Calu3 (cell line): ENCODE measurements at regions of chr3 and their contacts with region 1.

Region 1: GRCh38 chr3:160099834-160100233 is 111.2 kb downstream of the IL12A start:
- DNase-seq: no peak
- H3K4me3 Mint-ChIP-seq: no peak overlapping the region
- H3K27ac Mint-ChIP-seq: no peak overlapping the region
- H3K4me1 Mint-ChIP-seq: peaks cover 22% of the 10 kb centered on the region
- H3K27me3 Mint-ChIP-seq: no peaks in the 10 kb centered on the region
- CTCF ChIP-seq: no peak

Region 2: GRCh38 chr3:159884661-159885402 is 215.0 kb before region 1 on chr3:
- CTCF ChIA-PET with region 1: no interaction called
- intact Hi-C with region 1: loop called (anchors 10 kb)
- DNase-seq: peak; percentile 17
- H3K4me3 Mint-ChIP-seq: no peak overlapping the region
- H3K27ac Mint-ChIP-seq: no peak overlapping the region
- H3K4me1 Mint-ChIP-seq: no peaks in the 10 kb centered on the region
- H3K27me3 Mint-ChIP-seq: no peaks in the 10 kb centered on the region
- CTCF ChIP-seq: peak; percentile 75

Region 3: DNA sequence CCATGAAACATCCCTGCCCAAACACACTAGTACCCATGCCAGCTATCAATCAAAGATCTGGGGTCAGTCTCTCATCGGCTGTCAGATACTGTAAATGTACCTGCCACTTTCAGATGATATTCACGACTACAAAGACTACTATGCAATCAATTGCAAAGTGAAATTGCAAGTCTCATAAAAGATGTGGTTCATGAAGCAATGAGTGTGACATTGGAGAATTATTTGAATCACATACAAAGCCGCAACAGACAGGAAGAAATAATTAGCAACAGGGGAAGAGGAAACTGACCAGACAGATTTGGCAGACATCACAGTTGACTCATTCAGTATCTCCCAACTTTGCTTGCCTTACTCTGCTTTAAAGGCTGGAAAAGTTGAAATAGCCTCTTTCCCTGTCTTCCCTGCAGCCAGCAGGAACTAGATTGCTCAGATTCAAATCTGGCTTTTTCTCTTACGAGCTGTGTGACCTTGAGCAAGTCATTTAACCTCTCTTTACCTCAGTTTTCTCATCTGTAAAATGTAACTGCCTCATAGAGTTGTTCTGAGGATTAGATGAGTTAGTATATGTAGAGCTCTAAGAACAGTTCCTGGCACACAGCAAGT is 29.7 kb after region 1 on chr3:
- CTCF ChIA-PET with region 1: interaction called, 5 read pairs
- intact Hi-C with region 1: loop called (anchors 1 kb)
- DNase-seq: no peak
- H3K4me3 Mint-ChIP-seq: peak overlapping the region; percentile 3
- H3K27ac Mint-ChIP-seq: peak overlapping the region; percentile 75
- H3K4me1 Mint-ChIP-seq: peaks cover 62% of the 10 kb centered on the region
- H3K27me3 Mint-ChIP-seq: no peaks in the 10 kb centered on the region
- CTCF ChIP-seq: no peak

Region 4: DNA sequence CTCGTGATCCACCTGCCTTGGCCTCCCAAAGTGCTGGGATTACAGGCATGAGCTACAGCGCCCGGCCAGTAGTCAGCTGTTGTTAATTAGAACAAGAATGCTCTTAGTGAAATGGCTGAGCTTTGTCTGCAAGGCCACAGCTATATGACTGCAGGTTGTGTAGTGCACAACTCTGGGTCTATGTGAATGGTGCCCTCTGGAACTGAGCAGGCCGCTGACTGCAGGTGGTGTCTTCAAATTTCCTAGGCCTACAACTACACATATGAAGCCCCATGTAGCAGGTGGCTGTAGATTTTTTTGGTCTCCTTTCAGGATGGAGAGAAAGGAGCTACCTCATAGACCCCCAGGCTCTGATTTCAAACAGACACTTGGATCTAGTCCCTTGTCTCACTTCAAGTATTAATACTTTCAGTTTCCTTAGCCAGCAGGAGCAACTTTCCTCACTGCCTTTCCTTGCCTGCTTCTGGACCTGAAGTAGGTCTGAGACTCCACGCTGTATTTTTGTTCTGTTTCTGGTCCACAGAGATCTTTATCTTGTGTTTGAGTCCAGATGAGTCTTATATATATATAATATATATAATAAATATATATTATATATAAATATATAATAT is 212.3 kb after region 1 on chr3:
- CTCF ChIA-PET with region 1: no interaction called
- intact Hi-C with region 1: no loop called
- DNase-seq: no peak
- H3K4me3 Mint-ChIP-seq: no peak overlapping the region
- H3K27ac Mint-ChIP-seq: no peak overlapping the region
- H3K4me1 Mint-ChIP-seq: peaks cover 15% of the 10 kb centered on the region
- H3K27me3 Mint-ChIP-seq: no peaks in the 10 kb centered on the region
- CTCF ChIP-seq: no peak